Right lobe of liver (tissue), 6 donors: ENCODE measurements at regions of chr5 and their contacts with region 1.

Region 1: GRCh38 chr5:32585446-32586275 is at the start of gene SUB1:
- DNase-seq: peak; percentile 96 to 97 (median 96)
- ATAC-seq: peak; percentile 90 to 96 (median 95)
- H3K4me3 ChIP-seq: peak within 1 kb of the TSS; percentile 76 to 89 (median 87)
- H3K27ac ChIP-seq: peak within 1 kb of the TSS; percentile 97 to 99 (median 97)
- H3K4me1 ChIP-seq: peaks cover 0 to 12% (median 5%) of the 10 kb centered on the region in 4 donors
- H3K27me3 ChIP-seq: no peaks in the 10 kb centered on the region
- CTCF ChIP-seq: no peak
- POLR2A ChIP-seq: peak; percentile 81
- total RNA-seq, gene SUB1: 52.5 to 124 (median 94.9) TPM

Region 2: DNA sequence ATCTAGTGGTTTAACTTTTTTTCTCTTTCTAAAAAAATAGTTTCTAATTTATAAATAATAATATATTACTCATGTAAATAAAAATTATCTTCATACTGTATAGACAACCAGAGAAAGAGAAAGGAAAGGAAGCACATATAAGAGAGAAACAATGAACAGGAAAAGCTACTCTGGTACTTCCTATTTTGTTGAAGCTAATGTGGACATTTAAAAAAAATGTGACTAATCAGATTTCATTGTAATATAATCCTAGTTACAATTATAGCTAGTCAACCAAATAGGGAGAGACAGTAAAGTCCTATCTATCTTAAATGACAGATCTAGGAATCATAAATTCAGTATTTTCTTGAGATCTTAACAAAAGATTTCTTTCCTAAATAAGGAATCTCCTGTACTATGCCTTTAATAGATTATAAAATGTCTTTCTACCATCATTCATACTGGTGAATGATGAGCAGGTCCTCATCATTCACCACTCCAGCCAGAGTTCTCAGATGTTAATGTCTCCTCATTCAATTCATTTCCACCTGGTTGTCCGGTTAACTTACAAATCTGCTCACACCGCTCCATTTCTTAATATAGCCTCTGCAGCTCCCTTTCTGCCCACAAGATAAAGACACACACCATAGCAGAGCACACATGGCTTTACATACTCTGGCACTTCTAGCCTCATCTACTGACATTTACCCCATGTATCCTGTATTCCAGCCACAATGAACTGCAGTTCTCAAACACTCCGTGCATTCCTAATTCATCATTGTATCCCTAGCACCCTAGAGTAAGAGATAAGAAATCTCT is 172.0 kb before region 1 on chr5:
- intact Hi-C with region 1: no loop called
- DNase-seq: no peak
- ATAC-seq: peak in 1 of 4 donors; percentile 23
- H3K4me3 ChIP-seq: no peak overlapping the region
- H3K27ac ChIP-seq: no peak overlapping the region
- H3K4me1 ChIP-seq: no peaks in the 10 kb centered on the region
- H3K27me3 ChIP-seq: no peaks in the 10 kb centered on the region
- CTCF ChIP-seq: no peak
- POLR2A ChIP-seq: no peak

Region 3: GRCh38 chr5:32522429-32523143 is 63.1 kb before region 1 on chr5:
- intact Hi-C with region 1: loop called in 1 of 2 experiments (anchors 10 kb)
- DNase-seq: peak in 1 of 3 donors; percentile 28
- ATAC-seq: peak in 3 of 4 donors; percentile 32 to 61 (median 36)
- H3K4me3 ChIP-seq: no peak overlapping the region
- H3K27ac ChIP-seq: no peak overlapping the region
- H3K4me1 ChIP-seq: no peaks in the 10 kb centered on the region
- H3K27me3 ChIP-seq: no peaks in the 10 kb centered on the region
- CTCF ChIP-seq: no peak
- POLR2A ChIP-seq: no peak

Region 4: DNA sequence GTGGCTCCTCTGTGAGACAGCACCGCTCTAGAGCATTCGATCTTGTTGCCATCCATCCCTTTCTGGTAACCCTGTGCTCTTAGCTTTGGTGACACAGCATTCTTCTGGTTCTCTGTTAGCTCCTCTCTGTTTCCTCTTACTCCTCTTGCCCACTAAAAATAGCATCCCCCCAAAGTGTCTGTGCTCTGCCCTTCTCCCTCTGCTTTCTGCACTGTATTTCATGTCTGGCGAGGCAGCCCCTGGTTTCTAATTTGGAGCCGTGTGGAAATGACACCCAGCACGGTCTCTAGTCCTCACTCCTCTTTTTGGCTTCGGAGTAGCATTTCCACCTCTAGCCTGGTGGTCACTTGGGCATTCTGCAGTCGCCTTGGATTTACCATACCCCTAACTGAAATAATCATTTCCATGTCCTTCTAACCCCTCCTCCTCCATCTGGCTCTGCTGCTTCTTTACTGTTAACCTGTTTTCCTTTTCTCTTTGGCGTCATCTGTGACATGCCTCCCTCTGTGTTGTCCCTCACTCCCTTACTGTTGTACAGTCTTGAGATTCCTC is 149.2 kb after region 1 on chr5:
- intact Hi-C with region 1: no loop called
- DNase-seq: no peak
- ATAC-seq: no peak
- H3K4me3 ChIP-seq: no peak overlapping the region
- H3K27ac ChIP-seq: no peak overlapping the region
- H3K4me1 ChIP-seq: no peaks in the 10 kb centered on the region
- H3K27me3 ChIP-seq: no peaks in the 10 kb centered on the region
- CTCF ChIP-seq: no peak
- POLR2A ChIP-seq: no peak

Region 5: DNA sequence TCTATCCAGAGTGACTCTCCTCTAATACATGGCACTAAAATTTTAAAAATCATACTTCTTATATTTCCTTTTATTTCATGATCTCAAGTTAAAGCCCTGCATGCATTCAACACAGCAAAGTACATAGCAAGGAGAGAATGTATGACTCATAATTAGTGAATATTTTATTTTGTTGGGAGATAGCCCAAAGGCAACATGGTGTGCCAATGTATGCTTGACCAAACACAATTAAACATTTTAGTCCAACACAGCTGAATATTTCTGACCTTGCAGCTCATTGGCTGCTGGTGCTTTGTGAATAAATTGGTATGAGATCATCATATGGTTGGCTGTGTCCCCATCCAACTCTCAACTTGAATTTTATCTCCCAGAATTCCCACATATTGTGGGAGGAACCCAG is 229.0 kb after region 1 on chr5:
- intact Hi-C with region 1: no loop called
- DNase-seq: no peak
- ATAC-seq: no peak
- H3K4me3 ChIP-seq: no peak overlapping the region
- H3K27ac ChIP-seq: no peak overlapping the region
- H3K4me1 ChIP-seq: peaks cover 0 to 14% (median 0%) of the 10 kb centered on the region in 4 donors
- H3K27me3 ChIP-seq: no peaks in the 10 kb centered on the region
- CTCF ChIP-seq: no peak
- POLR2A ChIP-seq: no peak